K562 (cell line): ENCODE measurements at regions of chr6 and their contacts with region 1.

Region 1: DNA sequence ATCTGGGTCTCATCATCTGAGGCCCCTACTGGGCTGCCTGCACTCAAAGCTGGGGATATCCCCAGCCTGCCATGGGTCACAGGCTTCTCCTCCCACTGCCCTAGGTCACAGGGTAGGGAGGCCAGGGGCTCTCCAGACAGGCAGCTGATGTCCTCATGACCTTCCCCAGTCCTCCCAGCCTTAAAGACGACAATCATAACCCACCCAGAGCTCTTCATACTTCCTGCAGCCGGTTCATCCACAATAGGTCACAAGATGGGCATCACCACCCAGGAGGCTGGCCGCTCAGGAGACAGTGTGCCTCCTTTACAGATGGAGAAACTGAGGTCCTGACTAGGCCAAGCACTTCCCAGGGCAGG is 15.2 kb downstream of the TFEB start:
- DNase-seq: no peak
- ATAC-seq: no peak
- H3K4me3 ChIP-seq: no peak overlapping the region
- H3K27ac ChIP-seq: no peak overlapping the region
- H3K4me1 ChIP-seq: peaks cover 16 to 18% of the 10 kb centered on the region in 2 experiments
- H3K27me3 ChIP-seq: peaks cover 2 to 18% of the 10 kb centered on the region in 2 experiments; a peak in 3 of 5 replicates
- CTCF ChIP-seq: no peak
- EP300 ChIP-seq: no peak
- POLR2A ChIP-seq: no peak
- RAD21 ChIP-seq: no peak

Region 2: GRCh38 chr6:41735427-41736356 is 15.5 kb after region 1 on chr6 and contains the start of gene TFEB:
- CTCF ChIA-PET with region 1: no interaction called
- POLR2A ChIA-PET with region 1: interaction called, 11 read pairs
- in situ Hi-C with region 1: no loop called
- intact Hi-C with region 1: no loop called
- DNase-seq: peak; percentile 95 to 98 (median 97)
- ATAC-seq: peak; percentile 89
- H3K4me3 ChIP-seq: peak within 1 kb of the TSS; percentile 63
- H3K27ac ChIP-seq: no peak within 1 kb of the TSS
- H3K4me1 ChIP-seq: peaks cover 5 to 29% of the 10 kb centered on the region in 2 experiments
- H3K27me3 ChIP-seq: peaks cover 11 to 33% of the 10 kb centered on the region in 2 experiments; a peak in 3 of 5 replicates
- CTCF ChIP-seq: peak; percentile 91 to 97 (median 94)
- EP300 ChIP-seq: 0 out of 2 replicates have a peak, but pooled peaks have one; percentile 24
- POLR2A ChIP-seq: no peak
- RAD21 ChIP-seq: peak; percentile 78 to 82
- polyA plus RNA-seq, gene TFEB: 0.04 to 0.07 TPM

Region 3: GRCh38 chr6:42387336-42387735 is 667.1 kb after region 1 on chr6:
- CTCF ChIA-PET with region 1: no interaction called
- POLR2A ChIA-PET with region 1: no interaction called
- in situ Hi-C with region 1: no loop called
- intact Hi-C with region 1: no loop called
- DNase-seq: no peak
- ATAC-seq: no peak
- H3K4me3 ChIP-seq: no peak overlapping the region
- H3K27ac ChIP-seq: no peak overlapping the region
- H3K4me1 ChIP-seq: no peaks in the 10 kb centered on the region
- H3K27me3 ChIP-seq: peaks cover 44 to 75% of the 10 kb centered on the region in 2 experiments; a peak in 4 of 5 replicates
- CTCF ChIP-seq: no peak
- EP300 ChIP-seq: no peak
- POLR2A ChIP-seq: no peak
- RAD21 ChIP-seq: no peak